ENCODE measurements at regions of chr2 and their contacts with region 1.

Region 1: GRCh38 chr2:86221066-86221684 is 21.9 kb downstream of the MRPL35 start:
- DNase-seq: peak; percentile 54 to 63
- H3K4me3 ChIP-seq: no peak overlapping the region
- H3K27ac ChIP-seq: peak overlapping the region; percentile 78 to 82
- H3K4me1 ChIP-seq: peaks cover 5 to 22% of the 10 kb centered on the region in 2 donors
- H3K27me3 ChIP-seq: no peaks in the 10 kb centered on the region
- CTCF ChIP-seq: peak; percentile 85 to 92 (median 90)
- POLR2A ChIP-seq: no peak

Region 2: DNA sequence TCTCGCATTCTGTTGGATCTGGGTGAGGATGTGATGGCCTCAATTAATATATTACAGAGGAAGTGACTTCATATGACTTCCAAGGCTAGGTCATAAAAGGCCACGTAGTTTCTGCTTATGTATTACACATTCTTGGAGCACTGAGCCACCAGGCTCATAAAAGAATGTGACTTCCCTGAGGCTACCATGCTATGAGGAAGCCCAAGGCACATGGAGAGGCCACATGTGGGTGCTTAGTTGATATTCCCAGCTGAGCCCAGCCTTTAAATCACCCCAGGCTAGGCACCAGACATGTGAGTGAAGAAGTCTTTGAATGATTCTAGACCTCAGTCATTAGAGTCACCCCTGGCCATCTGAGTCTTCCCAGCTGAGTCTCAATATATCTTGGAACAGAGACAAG is 129.6 kb after region 1 on chr2:
- intact Hi-C with region 1: no loop called
- DNase-seq: no peak
- H3K4me3 ChIP-seq: no peak overlapping the region
- H3K27ac ChIP-seq: no peak overlapping the region
- H3K4me1 ChIP-seq: no peaks in the 10 kb centered on the region
- H3K27me3 ChIP-seq: no peaks in the 10 kb centered on the region
- CTCF ChIP-seq: no peak
- POLR2A ChIP-seq: no peak

Region 3: GRCh38 chr2:86368161-86368824 is 147.1 kb after region 1 on chr2:
- intact Hi-C with region 1: loop called (anchors 5 kb)
- DNase-seq: peak; percentile 35 to 37
- H3K4me3 ChIP-seq: no peak overlapping the region
- H3K27ac ChIP-seq: no peak overlapping the region
- H3K4me1 ChIP-seq: no peaks in the 10 kb centered on the region
- H3K27me3 ChIP-seq: no peaks in the 10 kb centered on the region
- CTCF ChIP-seq: peak; percentile 26 to 61 (median 53)
- POLR2A ChIP-seq: no peak

Region 4: DNA sequence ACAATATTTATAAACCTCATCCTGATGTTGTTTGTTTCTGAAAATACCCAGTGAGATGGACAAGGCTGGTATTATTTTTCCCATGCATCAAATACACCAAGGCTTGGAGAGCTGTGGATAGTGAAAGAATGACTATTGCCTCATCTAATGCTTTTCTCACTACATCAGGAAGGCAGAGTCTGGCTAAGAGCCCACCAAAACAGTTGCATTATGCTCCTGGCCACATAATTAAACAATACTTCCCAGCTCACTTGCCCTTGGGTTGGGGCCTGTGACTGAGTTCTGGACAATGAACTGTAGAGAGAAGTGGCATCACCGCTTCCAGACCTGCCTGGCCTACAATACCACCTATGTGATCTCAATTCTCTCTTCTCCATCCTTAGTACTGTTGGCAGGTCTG is 162.7 kb after region 1 on chr2:
- intact Hi-C with region 1: no loop called
- DNase-seq: no peak
- H3K4me3 ChIP-seq: no peak overlapping the region
- H3K27ac ChIP-seq: no peak overlapping the region
- H3K4me1 ChIP-seq: no peaks in the 10 kb centered on the region
- H3K27me3 ChIP-seq: no peaks in the 10 kb centered on the region
- CTCF ChIP-seq: no peak
- POLR2A ChIP-seq: no peak

Measured in uterus (tissue), 4 donors.